CD8-positive, alpha-beta memory T cell (primary cell): ENCODE measurements at regions of chr14 and their contacts with region 1.

Region 1: GRCh38 chr14:23929822-23930294 is 23.7 kb upstream of the DHRS4 start:
- DNase-seq: peak; percentile 59 to 85 (median 71)
- H3K4me3 ChIP-seq: no peak overlapping the region
- H3K4me3 Mint-ChIP-seq: no peak overlapping the region
- H3K27ac ChIP-seq: no peak overlapping the region
- H3K27ac Mint-ChIP-seq: no peak overlapping the region
- H3K4me1 ChIP-seq: no peaks in the 10 kb centered on the region
- H3K4me1 Mint-ChIP-seq: no peaks in the 10 kb centered on the region
- H3K27me3 ChIP-seq: no peaks in the 10 kb centered on the region
- H3K27me3 Mint-ChIP-seq: peaks cover 4 to 8% of the 10 kb centered on the region in 2 donors

Region 2: GRCh38 chr14:23588884-23589598 is 340.8 kb before region 1 on chr14:
- CTCF ChIA-PET with region 1: interaction called, 26 read pairs
- POLR2A ChIA-PET with region 1: no interaction called
- DNase-seq: peak; percentile 65 to 86 (median 76)
- H3K4me3 ChIP-seq: no peak overlapping the region
- H3K4me3 Mint-ChIP-seq: peak overlapping the region in 1 of 7 donors; percentile 20
- H3K27ac ChIP-seq: no peak overlapping the region
- H3K27ac Mint-ChIP-seq: peak overlapping the region in 2 of 8 donors; percentile 58 to 60
- H3K4me1 ChIP-seq: peaks cover 9% of the 10 kb centered on the region
- H3K4me1 Mint-ChIP-seq: peaks cover 3 to 8% (median 7%) of the 10 kb centered on the region in 3 donors
- H3K27me3 ChIP-seq: no peaks in the 10 kb centered on the region
- H3K27me3 Mint-ChIP-seq: peaks cover 13 to 22% of the 10 kb centered on the region in 2 donors

Region 3: GRCh38 chr14:23916446-23916845 is 13.4 kb before region 1 on chr14:
- CTCF ChIA-PET with region 1: no interaction called
- POLR2A ChIA-PET with region 1: no interaction called
- DNase-seq: no peak
- H3K4me3 ChIP-seq: no peak overlapping the region
- H3K4me3 Mint-ChIP-seq: no peak overlapping the region
- H3K27ac ChIP-seq: no peak overlapping the region
- H3K27ac Mint-ChIP-seq: no peak overlapping the region
- H3K4me1 ChIP-seq: no peaks in the 10 kb centered on the region
- H3K4me1 Mint-ChIP-seq: no peaks in the 10 kb centered on the region
- H3K27me3 ChIP-seq: no peaks in the 10 kb centered on the region
- H3K27me3 Mint-ChIP-seq: peaks cover 11 to 35% of the 10 kb centered on the region in 2 donors

Region 4: GRCh38 chr14:23953464-23954278 is 23.8 kb after region 1 on chr14 and contains the start of gene DHRS4:
- CTCF ChIA-PET with region 1: interaction called, 10 read pairs
- POLR2A ChIA-PET with region 1: no interaction called
- DNase-seq: peak; percentile 69 to 88 (median 75)
- H3K4me3 ChIP-seq: peak within 1 kb of the TSS; percentile 87
- H3K4me3 Mint-ChIP-seq: peak within 1 kb of the TSS; percentile 95 to 100 (median 96)
- H3K27ac ChIP-seq: peak within 1 kb of the TSS; percentile 71
- H3K27ac Mint-ChIP-seq: peak within 1 kb of the TSS; percentile 76 to 97 (median 94)
- H3K4me1 ChIP-seq: peaks cover 16% of the 10 kb centered on the region
- H3K4me1 Mint-ChIP-seq: peaks cover 15 to 35% (median 27%) of the 10 kb centered on the region in 3 donors
- H3K27me3 ChIP-seq: no peaks in the 10 kb centered on the region
- H3K27me3 Mint-ChIP-seq: no peaks in the 10 kb centered on the region
- total RNA-seq, gene DHRS4: 24.0 to 25.2 TPM

Region 5: DNA sequence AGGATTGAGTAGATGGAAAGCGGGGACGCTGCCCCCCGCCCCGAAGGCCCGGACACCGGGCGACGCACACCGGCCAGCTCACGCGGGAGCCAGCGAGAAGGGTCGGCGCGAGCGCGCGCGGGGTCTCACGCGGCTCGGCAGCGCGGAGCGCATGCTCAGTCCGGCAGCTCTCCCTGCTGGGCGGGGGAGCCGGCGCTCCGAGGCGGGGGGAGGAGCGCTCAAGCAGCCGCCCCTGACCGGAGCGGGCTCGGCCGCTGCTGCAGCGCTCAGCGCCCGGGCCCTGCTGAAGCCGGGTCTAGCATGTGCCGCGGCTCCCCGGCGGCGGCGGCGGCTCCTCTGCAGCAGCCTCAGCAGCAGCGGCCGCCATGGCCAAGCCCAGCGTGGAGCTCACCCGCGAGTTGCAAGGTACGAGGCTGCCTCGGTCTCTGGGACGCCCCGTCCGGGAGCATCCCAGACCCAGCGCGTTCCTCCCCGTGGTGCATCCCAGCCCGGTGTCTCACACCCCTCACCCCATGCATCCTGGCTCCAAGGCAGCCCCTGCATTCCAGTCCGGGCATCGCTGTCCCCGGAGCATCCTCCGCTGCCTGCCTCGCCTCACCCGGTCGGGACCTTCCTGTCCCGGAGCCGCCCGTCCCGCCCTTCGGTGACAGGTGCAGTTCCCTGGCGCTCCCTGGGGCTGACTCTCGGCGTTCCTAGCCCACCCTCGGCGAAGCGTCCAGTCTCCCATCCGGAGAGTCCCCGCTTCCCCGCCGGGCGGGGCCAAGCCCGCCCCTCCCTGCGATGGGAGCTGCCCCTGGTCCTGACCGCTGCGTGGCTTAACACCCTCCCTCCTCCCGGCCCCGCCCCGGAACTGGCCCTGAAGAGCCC is 122.2 kb after region 1 on chr14 and contains the start of gene CARMIL3:
- CTCF ChIA-PET with region 1: no interaction called
- POLR2A ChIA-PET with region 1: no interaction called
- DNase-seq: peak; percentile 49 to 73 (median 56)
- H3K4me3 ChIP-seq: peak within 1 kb of the TSS; percentile 66
- H3K4me3 Mint-ChIP-seq: peak within 1 kb of the TSS; percentile 78 to 90 (median 84)
- H3K27ac ChIP-seq: no peak within 1 kb of the TSS
- H3K27ac Mint-ChIP-seq: peak within 1 kb of the TSS in 6 of 8 donors; percentile 16 to 94 (median 58)
- H3K4me1 ChIP-seq: peaks cover 9% of the 10 kb centered on the region
- H3K4me1 Mint-ChIP-seq: peaks cover 15 to 20% (median 18%) of the 10 kb centered on the region in 3 donors
- H3K27me3 ChIP-seq: no peaks in the 10 kb centered on the region
- H3K27me3 Mint-ChIP-seq: peaks cover 0 to 8% of the 10 kb centered on the region in 2 donors
- total RNA-seq, gene CARMIL3: 1.2 to 1.5 TPM